ENCODE measurements at regions of chr1 and their contacts with region 1.

Region 1: GRCh38 chr1:160681067-160681890 is 30.3 kb downstream of the CD48 start:
- H3K4me3 Mint-ChIP-seq: no peak overlapping the region
- H3K27ac Mint-ChIP-seq: peak overlapping the region; percentile 65
- H3K4me1 Mint-ChIP-seq: peaks cover 67% of the 10 kb centered on the region
- H3K27me3 Mint-ChIP-seq: no peaks in the 10 kb centered on the region

Region 2: GRCh38 chr1:160726498-160727315 is 45.4 kb after region 1 on chr1:
- intact Hi-C with region 1: loop called (anchors 5 kb)
- H3K4me3 Mint-ChIP-seq: no peak overlapping the region
- H3K27ac Mint-ChIP-seq: no peak overlapping the region
- H3K4me1 Mint-ChIP-seq: peaks cover 22% of the 10 kb centered on the region
- H3K27me3 Mint-ChIP-seq: no peaks in the 10 kb centered on the region

Region 3: DNA sequence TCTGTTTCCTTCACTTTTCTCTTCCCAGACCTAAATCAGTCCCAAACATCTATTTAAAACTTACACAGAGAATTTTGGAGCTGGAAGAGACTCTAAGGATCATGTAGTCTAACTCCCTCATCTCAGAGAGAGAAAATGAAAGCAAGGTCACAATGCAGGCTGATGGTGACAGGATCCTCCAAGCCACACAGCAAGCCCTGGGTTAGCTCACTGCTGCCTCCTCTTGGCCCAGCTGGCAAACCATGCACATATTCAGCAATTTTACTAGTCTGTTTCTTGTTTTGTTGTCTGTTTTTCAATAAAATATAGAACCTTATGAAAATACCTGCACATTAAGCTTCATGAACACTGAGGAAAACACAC is 87.0 kb after region 1 on chr1:
- intact Hi-C with region 1: loop called (anchors 2 kb)
- H3K4me3 Mint-ChIP-seq: no peak overlapping the region
- H3K27ac Mint-ChIP-seq: peak overlapping the region; percentile 70
- H3K4me1 Mint-ChIP-seq: peaks cover 22% of the 10 kb centered on the region
- H3K27me3 Mint-ChIP-seq: peaks cover 2% of the 10 kb centered on the region